Right ventricle myocardium inferior (tissue), 1 donor: ENCODE measurements at regions of chr10 and their contacts with region 1.

Region 1: DNA sequence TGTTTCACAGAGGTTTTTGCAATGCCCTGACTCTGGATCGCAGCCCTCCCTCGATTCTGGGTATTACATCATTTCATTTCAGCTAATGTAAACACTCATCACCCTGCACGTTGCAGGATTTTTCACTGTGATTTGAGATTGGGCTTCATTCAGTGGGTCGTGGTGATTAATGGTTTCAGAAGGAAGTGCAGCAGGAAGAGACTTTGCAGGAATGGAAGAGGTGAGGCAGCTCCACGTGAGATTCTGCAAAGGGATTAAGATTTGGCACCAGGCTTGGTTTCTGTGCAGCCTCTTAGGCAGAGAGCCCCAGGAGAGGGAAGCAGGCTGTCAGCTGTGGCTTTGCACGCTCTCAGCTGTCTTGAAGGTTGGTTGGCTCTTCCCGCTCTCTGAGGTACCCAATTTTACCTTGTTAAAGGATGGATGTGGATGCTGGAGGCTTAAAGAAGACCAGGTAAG is 95.2 kb downstream of the PLCE1 start:
- DNase-seq: peak; percentile 44
- ATAC-seq: peak; percentile 59

Region 2: GRCh38 chr10:94038024-94038423 is 50.9 kb before region 1 on chr10:
- intact Hi-C with region 1: no loop called
- DNase-seq: no peak
- ATAC-seq: no peak

Region 3: DNA sequence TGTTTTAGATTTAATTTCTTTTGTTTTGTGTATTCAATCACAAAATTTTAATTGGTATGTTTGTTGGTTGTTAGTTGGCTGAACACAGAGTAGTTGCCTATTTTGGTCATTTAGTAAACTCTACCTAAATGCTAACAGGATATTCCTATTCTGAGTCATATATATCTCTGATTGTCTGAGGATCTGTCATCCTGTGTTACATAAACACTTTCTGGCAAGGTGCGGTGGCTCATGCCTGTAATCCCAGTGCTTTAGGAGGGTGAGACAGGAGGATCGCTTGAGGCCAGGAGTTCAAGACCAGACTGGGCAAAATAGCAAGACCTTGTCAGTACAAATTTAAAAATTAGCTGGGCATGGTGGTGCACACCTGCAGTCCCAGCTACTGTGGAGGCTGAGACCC is 83.4 kb after region 1 on chr10:
- intact Hi-C with region 1: loop called (anchors 5 kb)
- DNase-seq: no peak
- ATAC-seq: no peak

Region 4: GRCh38 chr10:94213001-94213530 is 124.1 kb after region 1 on chr10:
- intact Hi-C with region 1: loop called (anchors 10 kb)
- DNase-seq: no peak
- ATAC-seq: peak; percentile 19